ENCODE measurements at regions of chr12 and their contacts with region 1.

Region 1: GRCh38 chr12:80763874-80764273 is 47.2 kb downstream of the MYF5 start:
- DNase-seq: peak; percentile 74
- H3K4me3 ChIP-seq: no peak overlapping the region
- H3K27ac ChIP-seq: no peak overlapping the region
- H3K4me1 ChIP-seq: peaks cover 7% of the 10 kb centered on the region
- H3K27me3 ChIP-seq: no peaks in the 10 kb centered on the region
- CTCF ChIP-seq: peak; percentile 77

Region 2: DNA sequence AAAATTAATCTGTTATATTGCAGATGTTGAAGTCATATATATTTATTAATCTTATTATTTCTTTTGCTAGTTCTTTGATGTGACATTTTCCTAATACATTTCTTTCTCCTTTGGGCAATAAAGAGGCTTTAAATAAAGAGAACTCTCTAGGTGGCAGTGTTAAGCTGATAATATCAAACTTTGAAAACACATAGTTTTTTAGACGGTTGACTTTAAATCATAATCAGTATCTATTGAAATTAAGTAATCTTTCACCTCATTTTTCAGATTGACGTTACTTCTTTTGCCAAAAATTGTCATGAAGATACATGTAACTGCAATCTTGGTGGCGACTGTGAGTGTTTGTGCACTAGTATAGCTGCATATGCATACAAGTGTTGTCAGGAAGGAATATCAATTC is 450.7 kb before region 1 on chr12:
- CTCF ChIA-PET with region 1: no interaction called
- POLR2A ChIA-PET with region 1: no interaction called
- intact Hi-C with region 1: loop called (anchors 10 kb)
- DNase-seq: peak; percentile 28
- H3K4me3 ChIP-seq: no peak overlapping the region
- H3K27ac ChIP-seq: no peak overlapping the region
- H3K4me1 ChIP-seq: no peaks in the 10 kb centered on the region
- H3K27me3 ChIP-seq: no peaks in the 10 kb centered on the region
- CTCF ChIP-seq: peak; percentile 56; the same call in 1 of the 2 replicates